ENCODE measurements at regions of chr11 and their contacts with region 1.

Region 1: GRCh38 chr11:121426476-121427399 is 25.4 kb upstream of the SORL1 start:
- DNase-seq: peak; percentile 43
- ATAC-seq: peak; percentile 95
- H3K4me3 ChIP-seq: peak overlapping the region; percentile 66
- H3K27ac ChIP-seq: no peak overlapping the region
- H3K4me1 ChIP-seq: peaks cover 5% of the 10 kb centered on the region; the same call in 1 of the 2 replicates
- H3K27me3 ChIP-seq: no peaks in the 10 kb centered on the region
- CTCF ChIP-seq: no peak; the same call in 1 of the 2 replicates

Region 2: DNA sequence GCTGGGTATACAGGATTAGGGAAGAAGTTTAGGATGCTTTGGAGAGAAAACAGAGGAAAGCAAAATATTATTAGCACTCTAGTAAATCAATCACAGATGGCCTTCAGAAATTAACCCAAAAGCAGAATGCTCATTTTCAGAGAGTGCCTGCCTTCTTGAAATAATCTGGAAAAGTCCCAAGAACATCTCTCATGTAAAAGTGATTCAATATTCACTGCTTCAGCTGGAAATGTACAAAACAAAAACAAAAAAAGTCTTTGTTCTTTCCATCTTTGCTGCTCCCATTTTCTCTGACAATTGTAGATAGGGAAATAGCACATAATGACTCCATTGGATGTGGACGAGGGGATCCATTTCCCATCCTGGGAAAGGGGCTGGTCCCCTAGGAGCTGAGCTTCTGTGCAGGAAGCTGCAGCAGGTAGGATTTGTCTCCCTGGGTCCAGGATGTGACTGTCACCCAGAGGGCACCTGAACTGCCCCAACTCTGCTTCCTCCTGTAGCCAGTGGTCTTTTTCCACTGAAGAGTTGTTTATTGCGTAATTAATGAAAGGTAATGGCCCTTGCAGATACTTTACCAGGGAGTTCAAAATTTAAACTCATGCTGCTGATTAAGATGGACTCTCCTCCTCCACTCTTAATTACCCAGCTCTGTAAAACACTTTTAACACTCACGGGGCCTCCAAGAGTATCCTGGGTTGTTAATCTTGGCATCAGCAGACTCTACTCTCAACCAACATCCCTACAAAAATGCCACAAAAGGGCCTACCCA is 76.2 kb before region 1 on chr11:
- CTCF ChIA-PET with region 1: no interaction called
- POLR2A ChIA-PET with region 1: no interaction called
- intact Hi-C with region 1: no loop called
- DNase-seq: no peak
- ATAC-seq: no peak
- H3K4me3 ChIP-seq: no peak overlapping the region
- H3K27ac ChIP-seq: no peak overlapping the region
- H3K4me1 ChIP-seq: 0 out of 2 replicates have a peak, but pooled peaks cover 8% of the 10 kb centered on the region
- H3K27me3 ChIP-seq: no peaks in the 10 kb centered on the region
- CTCF ChIP-seq: no peak

Region 3: GRCh38 chr11:121389651-121390050 is 37.1 kb before region 1 on chr11:
- CTCF ChIA-PET with region 1: no interaction called
- POLR2A ChIA-PET with region 1: no interaction called
- intact Hi-C with region 1: no loop called
- DNase-seq: no peak
- ATAC-seq: no peak
- H3K4me3 ChIP-seq: no peak overlapping the region
- H3K27ac ChIP-seq: no peak overlapping the region
- H3K4me1 ChIP-seq: peaks cover 13% of the 10 kb centered on the region
- H3K27me3 ChIP-seq: no peaks in the 10 kb centered on the region
- CTCF ChIP-seq: no peak

Region 4: GRCh38 chr11:121405646-121406045 is 21.1 kb before region 1 on chr11:
- CTCF ChIA-PET with region 1: no interaction called
- POLR2A ChIA-PET with region 1: interaction called, 19 read pairs
- intact Hi-C with region 1: no loop called
- DNase-seq: no peak
- ATAC-seq: no peak
- H3K4me3 ChIP-seq: no peak overlapping the region
- H3K27ac ChIP-seq: no peak overlapping the region
- H3K4me1 ChIP-seq: no peaks in the 10 kb centered on the region
- H3K27me3 ChIP-seq: no peaks in the 10 kb centered on the region
- CTCF ChIP-seq: no peak

Region 5: GRCh38 chr11:121553806-121554205 is 127.1 kb after region 1 on chr11:
- CTCF ChIA-PET with region 1: no interaction called
- POLR2A ChIA-PET with region 1: no interaction called
- intact Hi-C with region 1: no loop called
- DNase-seq: peak; percentile 96
- ATAC-seq: peak; percentile 99
- H3K4me3 ChIP-seq: no peak overlapping the region
- H3K27ac ChIP-seq: peak overlapping the region; percentile 42
- H3K4me1 ChIP-seq: peaks cover 23% of the 10 kb centered on the region
- H3K27me3 ChIP-seq: no peaks in the 10 kb centered on the region
- CTCF ChIP-seq: no peak

Region 6: GRCh38 chr11:121606354-121606753 is 179.6 kb after region 1 on chr11:
- CTCF ChIA-PET with region 1: no interaction called
- POLR2A ChIA-PET with region 1: no interaction called
- intact Hi-C with region 1: no loop called
- DNase-seq: no peak
- ATAC-seq: no peak
- H3K4me3 ChIP-seq: no peak overlapping the region
- H3K27ac ChIP-seq: no peak overlapping the region
- H3K4me1 ChIP-seq: no peaks in the 10 kb centered on the region
- H3K27me3 ChIP-seq: no peaks in the 10 kb centered on the region
- CTCF ChIP-seq: no peak